ENCODE measurements at regions of chr3 and their contacts with region 1.

Region 1: DNA sequence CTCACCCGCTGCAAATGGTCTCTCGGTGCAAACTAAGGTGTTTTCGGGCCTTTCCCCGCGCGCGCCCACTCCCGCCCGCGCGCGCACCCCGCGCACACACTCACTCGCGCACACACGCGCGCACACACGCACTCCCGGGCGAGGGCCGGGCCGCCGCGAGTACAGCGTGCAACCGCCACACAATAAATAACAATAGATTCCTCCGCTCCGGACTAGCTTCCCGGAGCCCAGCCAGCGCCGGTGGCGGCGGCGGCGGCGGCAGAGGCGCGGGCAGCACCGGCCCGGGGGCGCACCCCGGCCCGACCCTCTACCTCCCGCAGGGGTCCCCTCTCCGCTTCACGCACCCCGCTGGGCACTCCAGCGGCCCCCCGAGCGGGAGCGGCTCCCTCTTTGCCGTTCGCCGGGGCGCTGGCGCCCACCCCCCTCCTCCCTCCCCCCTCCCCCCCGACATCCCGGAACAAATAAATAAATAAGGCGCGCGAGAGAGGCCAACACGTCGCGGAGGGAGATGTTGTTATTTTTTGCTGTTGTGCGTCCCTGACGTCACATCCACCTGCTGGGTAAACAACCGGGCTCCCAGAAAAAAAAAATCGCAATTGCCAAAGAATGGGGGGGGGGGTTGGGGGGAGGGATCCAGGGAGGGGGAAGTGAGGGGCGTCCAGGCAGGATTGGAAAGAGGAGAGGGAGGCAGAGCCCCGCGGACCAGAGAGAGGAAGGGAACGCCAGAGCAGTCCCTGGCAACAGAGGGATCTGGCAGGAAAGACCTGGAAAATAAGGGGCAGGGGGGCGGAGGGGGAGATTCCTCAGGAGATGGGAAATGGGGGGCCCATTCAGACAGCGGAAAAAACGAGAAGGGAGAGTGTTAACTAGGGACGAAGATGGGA is at the start of gene FOXP1:
- DNase-seq: peak; percentile 63
- H3K4me3 Mint-ChIP-seq: peak within 1 kb of the TSS; percentile 95
- H3K27ac Mint-ChIP-seq: peak within 1 kb of the TSS; percentile 99
- H3K4me1 Mint-ChIP-seq: peaks cover 47% of the 10 kb centered on the region
- H3K27me3 Mint-ChIP-seq: no peaks in the 10 kb centered on the region
- total RNA-seq, gene FOXP1: 95.2 to 97.4 TPM

Region 2: DNA sequence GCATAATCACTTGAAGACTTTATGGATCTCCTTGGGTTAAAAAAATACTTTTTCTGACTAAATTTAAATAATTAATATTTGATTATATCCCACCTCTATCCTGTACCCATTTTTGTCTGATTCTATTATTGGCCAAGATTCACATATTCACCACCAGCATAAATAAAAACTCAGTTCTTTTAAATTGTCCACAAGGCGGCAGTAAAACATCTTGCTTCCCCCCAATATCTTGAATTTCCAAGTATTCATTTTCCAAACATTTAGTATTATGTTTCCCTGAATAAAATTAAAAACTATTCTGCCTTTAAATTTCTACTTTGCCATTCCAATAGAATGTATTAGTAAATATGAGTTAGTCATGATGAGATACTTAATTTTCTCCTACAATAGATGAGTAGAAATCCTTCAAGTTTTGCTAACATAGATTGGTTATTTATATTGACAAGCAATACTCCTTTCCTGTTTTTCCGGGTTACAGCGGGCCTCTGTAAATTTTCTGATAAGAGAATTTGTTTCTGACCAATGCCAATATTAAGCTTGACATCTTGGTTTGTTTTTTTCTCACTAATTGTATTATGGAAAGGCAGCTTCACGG is 1052.6 kb before region 1 on chr3:
- CTCF ChIA-PET with region 1: interaction called, 3 read pairs
- intact Hi-C with region 1: loop called (anchors 5 kb)
- DNase-seq: no peak
- H3K4me3 Mint-ChIP-seq: no peak overlapping the region
- H3K27ac Mint-ChIP-seq: no peak overlapping the region
- H3K4me1 Mint-ChIP-seq: no peaks in the 10 kb centered on the region
- H3K27me3 Mint-ChIP-seq: peaks cover 1% of the 10 kb centered on the region

Region 3: GRCh38 chr3:70856414-70857162 is 727.2 kb before region 1 on chr3:
- CTCF ChIA-PET with region 1: no interaction called
- intact Hi-C with region 1: loop called (anchors 5 kb)
- DNase-seq: peak; percentile 10
- H3K4me3 Mint-ChIP-seq: no peak overlapping the region
- H3K27ac Mint-ChIP-seq: no peak overlapping the region
- H3K4me1 Mint-ChIP-seq: peaks cover 28% of the 10 kb centered on the region
- H3K27me3 Mint-ChIP-seq: peaks cover 23% of the 10 kb centered on the region

Region 4: GRCh38 chr3:71130471-71131374 is 453.1 kb before region 1 on chr3:
- CTCF ChIA-PET with region 1: no interaction called
- intact Hi-C with region 1: loop called (anchors 2 kb)
- DNase-seq: peak; percentile 82
- H3K4me3 Mint-ChIP-seq: peak overlapping the region; percentile 88
- H3K27ac Mint-ChIP-seq: peak overlapping the region; percentile 96
- H3K4me1 Mint-ChIP-seq: peaks cover 66% of the 10 kb centered on the region
- H3K27me3 Mint-ChIP-seq: no peaks in the 10 kb centered on the region

Region 5: DNA sequence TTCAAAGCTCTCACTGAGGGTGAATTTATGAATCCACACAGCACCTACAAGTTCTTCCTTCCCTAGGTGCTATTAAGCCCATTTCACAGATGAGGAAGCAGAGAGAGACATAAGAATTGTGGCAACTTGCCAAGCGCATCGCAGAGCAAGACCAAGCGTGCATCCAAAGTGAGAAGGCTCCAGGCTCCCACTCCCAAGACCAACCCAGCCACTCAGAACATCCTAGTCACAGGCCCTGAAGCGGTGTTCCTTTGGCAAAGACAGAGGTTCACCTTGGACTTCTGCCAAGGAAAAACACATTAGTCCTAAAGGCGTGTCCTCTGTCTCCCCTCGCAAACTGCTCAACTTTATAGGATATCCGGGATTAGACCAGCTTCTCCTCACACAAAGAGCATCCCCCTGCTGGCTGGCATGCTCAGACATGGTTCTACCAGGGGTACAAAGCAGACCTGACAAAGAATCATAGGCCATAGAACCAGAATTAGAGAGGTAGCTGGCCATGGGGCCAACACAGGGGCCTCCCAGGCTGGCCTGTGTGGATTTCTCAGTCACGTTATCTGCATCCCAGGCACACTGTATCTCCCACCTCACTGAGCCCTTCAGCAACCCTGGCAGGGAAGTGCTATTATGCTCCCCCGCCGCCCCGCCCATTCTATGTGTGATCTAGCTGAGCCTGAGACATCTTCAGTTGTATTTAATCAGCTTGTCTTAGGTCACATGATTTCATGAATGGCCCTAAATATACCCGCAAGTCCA is 160.5 kb before region 1 on chr3:
- CTCF ChIA-PET with region 1: no interaction called
- intact Hi-C with region 1: loop called (anchors 2 kb)
- DNase-seq: no peak
- H3K4me3 Mint-ChIP-seq: no peak overlapping the region
- H3K27ac Mint-ChIP-seq: peak overlapping the region; percentile 30
- H3K4me1 Mint-ChIP-seq: peaks cover 84% of the 10 kb centered on the region
- H3K27me3 Mint-ChIP-seq: no peaks in the 10 kb centered on the region

Region 6: DNA sequence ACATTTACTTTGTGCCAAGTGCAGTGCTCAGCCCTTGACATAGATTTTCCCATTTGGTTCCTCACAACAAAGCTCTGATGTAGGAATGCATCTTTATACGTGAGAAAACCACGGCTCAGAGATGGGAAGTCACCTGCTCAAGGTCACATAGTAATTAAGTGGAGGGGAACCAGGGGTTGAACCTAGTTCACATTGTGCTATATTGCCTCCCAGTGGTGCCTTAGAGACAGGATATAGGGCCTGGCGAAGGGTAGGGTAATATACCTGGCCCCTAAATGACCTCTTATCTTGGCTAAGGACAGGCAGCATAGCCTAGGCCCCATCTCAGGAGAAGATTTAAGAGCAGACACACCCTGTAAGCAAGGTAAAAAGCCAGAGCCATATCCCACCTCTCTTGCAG is 71.8 kb before region 1 on chr3:
- CTCF ChIA-PET with region 1: interaction called, 3 read pairs
- intact Hi-C with region 1: loop called (anchors 1 kb)
- DNase-seq: peak; percentile 59
- H3K4me3 Mint-ChIP-seq: no peak overlapping the region
- H3K27ac Mint-ChIP-seq: peak overlapping the region; percentile 6
- H3K4me1 Mint-ChIP-seq: peaks cover 12% of the 10 kb centered on the region
- H3K27me3 Mint-ChIP-seq: no peaks in the 10 kb centered on the region